ENCODE measurements at regions of chr11 and their contacts with region 1.

Region 1: GRCh38 chr11:62787005-62787759 is at the start of gene TMEM179B:
- DNase-seq: peak; percentile 78
- ATAC-seq: peak; percentile 83
- H3K4me3 ChIP-seq: peak within 1 kb of the TSS; percentile 86 to 98
- H3K27ac ChIP-seq: peak within 1 kb of the TSS; percentile 87
- H3K4me1 ChIP-seq: peaks cover 33% of the 10 kb centered on the region
- H3K27me3 ChIP-seq: no peaks in the 10 kb centered on the region
- CTCF ChIP-seq: peak; percentile 61; the same call in 1 of the 2 replicates
- total RNA-seq, gene TMEM179B: 50.9 TPM

Region 2: DNA sequence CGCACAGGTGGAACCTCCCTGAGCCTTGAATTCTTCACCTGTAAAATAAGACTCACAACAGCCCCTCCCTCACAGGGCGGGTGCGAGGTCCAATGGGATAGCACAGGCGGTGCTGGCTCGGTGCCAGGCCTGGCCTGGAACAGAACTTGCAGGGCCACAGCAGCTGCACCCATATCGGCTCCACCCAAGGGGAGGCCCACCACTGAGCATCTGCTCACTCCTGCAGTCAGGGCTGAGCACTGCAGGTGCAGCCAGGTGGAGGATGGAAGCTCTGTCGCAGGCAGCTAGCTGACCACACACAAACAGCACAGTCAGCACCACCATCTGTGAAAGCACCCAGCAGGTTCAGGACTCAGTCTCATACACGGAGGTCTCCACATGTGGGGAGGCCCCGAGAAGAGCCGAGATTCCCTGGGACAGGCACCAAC is 1645.6 kb before region 1 on chr11:
- CTCF ChIA-PET with region 1: no interaction called
- POLR2A ChIA-PET with region 1: no interaction called
- in situ Hi-C with region 1: no loop called
- intact Hi-C with region 1: no loop called
- DNase-seq: no peak
- ATAC-seq: 0 out of 2 replicates have a peak, but pooled peaks have one; percentile 47
- H3K4me3 ChIP-seq: no peak overlapping the region
- H3K27ac ChIP-seq: no peak overlapping the region
- H3K4me1 ChIP-seq: no peaks in the 10 kb centered on the region
- H3K27me3 ChIP-seq: no peaks in the 10 kb centered on the region
- CTCF ChIP-seq: no peak

Region 3: DNA sequence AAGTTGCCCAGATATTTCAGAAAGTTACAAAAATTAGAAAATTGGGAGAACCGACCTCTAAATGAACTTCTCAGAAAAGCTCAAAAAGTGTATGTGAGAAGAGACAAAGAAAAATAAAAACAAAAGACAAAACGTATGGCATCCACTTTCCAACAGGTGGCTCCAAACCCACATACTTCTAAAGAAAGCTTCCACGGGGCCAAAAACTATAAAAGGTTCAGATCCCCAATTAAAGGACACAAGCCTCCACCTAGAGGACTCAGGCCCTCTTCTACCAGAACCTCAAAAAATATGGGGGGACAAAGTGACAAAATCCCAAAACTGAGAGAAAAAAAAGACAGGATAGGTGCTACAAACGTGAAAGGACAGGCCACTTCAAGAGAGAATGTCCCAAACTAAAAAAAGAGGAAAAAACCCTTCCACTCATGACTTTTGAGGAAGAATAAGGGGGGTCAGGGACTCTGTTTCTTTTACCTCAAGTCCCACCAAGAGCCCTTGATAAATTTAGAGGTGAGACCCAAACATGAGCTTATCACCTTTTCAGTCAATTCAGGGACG is 569.9 kb before region 1 on chr11:
- CTCF ChIA-PET with region 1: interaction called, 11 read pairs
- POLR2A ChIA-PET with region 1: no interaction called
- in situ Hi-C with region 1: no loop called
- intact Hi-C with region 1: no loop called
- DNase-seq: no peak
- ATAC-seq: no peak
- H3K4me3 ChIP-seq: no peak overlapping the region
- H3K27ac ChIP-seq: no peak overlapping the region
- H3K4me1 ChIP-seq: no peaks in the 10 kb centered on the region
- H3K27me3 ChIP-seq: no peaks in the 10 kb centered on the region
- CTCF ChIP-seq: peak; percentile 73

Region 4: DNA sequence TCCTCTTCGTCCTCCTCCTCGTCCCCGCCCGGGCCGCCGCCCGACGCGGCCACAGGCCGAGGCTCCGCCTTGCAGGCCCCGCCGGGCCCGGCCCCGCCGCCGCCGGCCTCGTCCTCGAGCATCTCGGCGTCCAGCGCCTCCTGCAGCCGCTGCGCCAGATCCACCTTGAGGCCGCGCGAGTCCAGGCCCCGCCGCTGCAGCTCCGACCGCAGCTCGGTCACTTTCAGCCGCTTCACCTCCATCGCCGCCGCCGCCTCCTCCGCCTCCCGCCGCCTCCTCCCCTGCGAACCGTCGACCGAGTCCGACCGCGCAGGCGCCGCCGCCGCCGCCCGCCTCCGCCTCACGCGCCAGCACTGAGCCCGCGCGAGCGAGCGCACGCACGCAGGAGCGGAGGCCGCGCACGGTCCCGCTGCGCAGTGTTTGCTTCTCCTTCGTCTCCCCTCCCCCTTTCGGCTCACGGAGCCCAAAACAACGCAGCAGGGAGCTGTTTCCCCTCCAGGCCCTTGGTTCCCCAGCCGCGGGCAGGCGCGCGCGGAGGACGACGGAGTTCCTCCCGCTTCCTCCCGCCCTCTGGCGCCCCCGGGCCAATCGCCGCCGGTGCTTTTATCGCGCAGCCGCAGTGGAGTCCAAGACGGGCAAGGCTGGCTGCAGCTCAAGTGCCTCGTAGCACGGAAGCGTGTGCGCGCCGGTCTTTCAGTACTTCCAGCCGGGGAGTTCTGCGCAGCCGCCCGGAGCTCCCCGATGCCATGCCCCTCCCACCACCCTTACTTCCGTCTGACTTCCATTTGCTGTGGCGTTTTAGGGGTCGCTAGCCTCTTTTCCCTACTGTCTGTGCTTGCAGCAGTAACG is 60.0 kb before region 1 on chr11 and contains the start of gene HNRNPUL2:
- CTCF ChIA-PET with region 1: interaction called, 11 read pairs
- POLR2A ChIA-PET with region 1: no interaction called
- in situ Hi-C with region 1: no loop called
- intact Hi-C with region 1: no loop called
- DNase-seq: peak; percentile 87
- ATAC-seq: peak; percentile 91
- H3K4me3 ChIP-seq: peak within 1 kb of the TSS; percentile 68 to 100
- H3K27ac ChIP-seq: peak within 1 kb of the TSS; percentile 99
- H3K4me1 ChIP-seq: peaks cover 9% of the 10 kb centered on the region
- H3K27me3 ChIP-seq: no peaks in the 10 kb centered on the region
- CTCF ChIP-seq: no peak
- total RNA-seq, gene HNRNPUL2: 47.3 TPM

Region 5: DNA sequence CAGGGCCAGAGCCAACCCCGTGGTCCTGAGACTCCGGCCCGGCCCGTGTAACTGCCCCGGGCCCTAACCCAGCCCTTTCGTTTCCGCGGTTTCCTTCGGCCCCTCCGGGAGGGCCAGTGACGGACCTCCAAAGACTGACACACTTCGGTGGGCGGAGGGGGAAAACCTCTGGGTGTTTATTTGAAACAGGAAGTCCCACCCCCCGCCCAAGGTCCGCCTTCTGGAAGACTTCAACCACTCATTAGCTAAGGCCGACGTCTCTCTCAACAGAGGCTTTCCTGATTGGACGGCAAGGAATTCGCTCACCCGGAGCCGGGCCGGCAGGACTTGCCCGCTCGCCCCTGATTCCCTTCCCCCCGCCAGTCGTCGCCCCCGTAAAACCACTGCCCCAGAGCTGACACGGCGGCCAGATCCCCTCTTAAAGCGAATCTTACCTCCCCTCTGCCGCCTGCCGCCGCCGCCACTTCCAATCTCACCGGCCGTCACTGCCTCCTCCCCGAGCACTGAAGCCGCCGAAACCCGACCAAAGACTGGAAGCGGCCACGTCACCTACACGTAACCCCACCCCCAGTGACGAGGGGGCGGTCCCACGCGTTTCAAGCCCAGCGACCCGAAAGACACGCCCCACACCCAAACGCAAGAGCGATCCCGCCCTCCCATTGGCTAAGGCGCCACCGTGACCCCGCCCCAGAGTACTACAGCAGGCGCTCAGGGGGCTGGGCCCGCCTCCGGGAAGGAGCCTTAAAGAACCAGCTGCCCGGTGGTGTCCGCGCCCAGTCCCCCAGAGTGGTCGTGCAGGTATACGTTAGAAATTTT is 44.5 kb after region 1 on chr11 and contains the start of gene STX5:
- CTCF ChIA-PET with region 1: no interaction called
- POLR2A ChIA-PET with region 1: interaction called, 11 read pairs
- in situ Hi-C with region 1: no loop called
- intact Hi-C with region 1: no loop called
- DNase-seq: peak; percentile 91
- ATAC-seq: peak; percentile 94
- H3K4me3 ChIP-seq: peak within 1 kb of the TSS; percentile 89 to 95
- H3K27ac ChIP-seq: peak within 1 kb of the TSS; percentile 91
- H3K4me1 ChIP-seq: peaks cover 18% of the 10 kb centered on the region
- H3K27me3 ChIP-seq: no peaks in the 10 kb centered on the region
- CTCF ChIP-seq: no peak
- total RNA-seq, gene STX5: 31.4 TPM

Region 6: DNA sequence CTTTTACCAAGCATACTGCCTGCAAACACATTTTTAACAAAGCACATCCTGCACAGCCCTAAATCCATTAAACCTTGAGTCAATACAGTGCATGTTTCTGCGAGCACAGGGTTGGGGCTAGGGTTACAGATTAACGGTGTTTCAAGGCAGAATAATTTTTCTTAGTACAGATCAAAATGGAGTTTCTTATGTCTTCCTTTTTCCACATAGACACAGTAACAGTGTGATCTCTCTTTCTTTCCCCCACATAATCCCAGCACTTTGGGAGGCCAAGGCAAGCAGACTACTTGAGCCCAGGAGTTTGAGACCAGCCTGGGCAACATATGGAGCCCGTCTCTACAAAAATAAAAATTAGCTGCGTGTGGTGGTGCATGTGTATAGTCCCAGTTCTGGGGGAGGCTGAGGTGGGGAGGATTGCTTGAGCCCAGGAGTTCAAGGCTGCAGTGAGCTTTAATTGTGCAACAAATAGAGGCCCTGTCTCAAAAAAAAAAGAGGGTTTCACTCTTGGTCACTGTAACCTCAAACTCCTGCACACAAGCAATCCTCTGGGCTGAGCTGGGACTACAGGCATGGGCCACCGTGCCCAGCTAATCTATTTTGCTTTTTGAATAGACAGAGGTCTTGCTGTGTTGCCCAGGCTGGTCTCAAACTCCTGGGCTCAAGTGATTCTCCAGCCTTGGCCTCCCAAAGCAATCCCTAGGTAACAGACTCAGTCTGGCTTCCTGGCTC is 73.8 kb after region 1 on chr11:
- CTCF ChIA-PET with region 1: interaction called, 7 read pairs
- POLR2A ChIA-PET with region 1: no interaction called
- in situ Hi-C with region 1: no loop called
- intact Hi-C with region 1: loop called (anchors 2 kb)
- DNase-seq: no peak
- ATAC-seq: no peak
- H3K4me3 ChIP-seq: no peak overlapping the region
- H3K27ac ChIP-seq: no peak overlapping the region
- H3K4me1 ChIP-seq: peaks cover 17% of the 10 kb centered on the region
- H3K27me3 ChIP-seq: no peaks in the 10 kb centered on the region
- CTCF ChIP-seq: no peak